ENCODE measurements at regions of chr6 and their contacts with region 1.

Region 1: DNA sequence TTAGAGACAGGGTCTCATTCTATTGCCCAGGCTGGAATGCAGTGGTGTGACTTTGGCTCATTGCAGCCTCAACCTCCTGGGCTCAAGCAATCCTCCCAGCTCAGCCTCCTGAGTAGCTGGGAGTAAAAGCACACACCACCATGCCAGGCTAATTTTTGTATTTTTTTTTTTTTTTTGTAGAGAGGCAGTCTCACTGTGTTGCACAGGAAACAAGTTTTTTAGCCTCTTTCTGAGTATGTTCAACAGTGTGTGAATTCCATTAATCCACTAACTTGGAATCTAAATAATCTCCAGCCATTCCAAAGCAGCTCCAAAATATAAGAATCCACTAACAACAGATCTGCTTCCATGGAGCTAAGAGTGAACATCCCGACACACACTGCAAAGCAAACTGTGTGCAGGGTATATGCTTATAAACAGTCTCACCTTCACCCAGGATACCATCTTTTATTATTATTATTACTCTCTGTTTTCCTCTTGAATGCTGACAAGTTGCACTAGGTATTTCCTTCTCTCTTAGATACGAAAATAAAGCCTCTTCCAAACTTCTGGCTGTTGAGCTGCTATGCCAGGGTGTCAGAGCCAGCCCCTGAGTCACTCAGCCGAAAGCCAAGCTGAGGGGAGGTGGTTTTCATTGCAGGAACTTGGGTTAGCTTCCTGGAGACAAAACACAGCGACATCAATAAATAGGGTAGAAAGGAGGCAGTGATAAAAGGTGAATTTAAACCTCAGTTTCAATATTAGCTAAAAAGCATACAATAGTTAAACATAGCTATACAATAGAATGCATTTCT is 264.9 kb downstream of the HIVEP2 start:
- DNase-seq: no peak
- H3K4me3 Mint-ChIP-seq: no peak overlapping the region
- H3K27ac Mint-ChIP-seq: no peak overlapping the region
- H3K4me1 Mint-ChIP-seq: no peaks in the 10 kb centered on the region
- H3K27me3 Mint-ChIP-seq: peaks cover 48% of the 10 kb centered on the region
- CTCF ChIP-seq: no peak

Region 2: DNA sequence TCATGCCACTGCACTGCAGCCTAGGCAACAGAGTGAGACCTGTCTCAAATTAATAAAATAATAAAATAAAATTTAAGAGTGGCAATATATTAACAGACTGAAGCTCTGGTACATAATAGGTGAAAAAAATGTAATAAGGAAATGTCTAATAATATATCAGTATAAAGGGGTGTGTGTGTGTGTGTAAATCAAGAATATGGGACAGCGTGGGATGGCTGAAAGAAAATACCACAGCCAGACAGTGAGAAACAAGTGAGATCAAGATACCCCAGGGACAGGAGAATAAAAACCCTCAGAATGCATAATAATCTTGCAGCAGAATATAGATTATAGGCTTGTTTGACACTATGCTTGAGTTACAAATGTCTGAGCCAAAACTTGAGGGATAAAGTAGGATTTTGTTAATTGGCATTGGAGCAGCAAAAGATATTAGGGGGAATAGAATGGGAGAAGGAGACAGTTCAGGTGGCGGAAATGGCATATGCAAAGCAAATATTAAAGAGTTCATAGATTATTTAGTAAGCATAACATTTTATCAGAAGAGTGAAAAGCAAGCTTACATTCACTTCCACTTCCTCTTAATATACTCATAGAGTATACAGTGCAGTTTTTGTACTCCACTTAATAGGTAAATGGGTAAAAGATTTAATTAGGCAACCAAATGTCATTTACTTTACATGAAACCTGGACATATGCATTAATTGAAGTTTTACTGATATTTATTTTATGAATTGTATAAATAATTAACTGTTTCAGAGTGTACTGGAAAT is 945.8 kb before region 1 on chr6:
- CTCF ChIA-PET with region 1: no interaction called
- intact Hi-C with region 1: no loop called
- DNase-seq: no peak
- H3K4me3 Mint-ChIP-seq: no peak overlapping the region
- H3K27ac Mint-ChIP-seq: no peak overlapping the region
- H3K4me1 Mint-ChIP-seq: no peaks in the 10 kb centered on the region
- H3K27me3 Mint-ChIP-seq: no peaks in the 10 kb centered on the region
- CTCF ChIP-seq: no peak

Region 3: GRCh38 chr6:142474531-142475289 is 205.4 kb before region 1 on chr6:
- CTCF ChIA-PET with region 1: no interaction called
- intact Hi-C with region 1: loop called (anchors 10 kb)
- DNase-seq: peak; percentile 62
- H3K4me3 Mint-ChIP-seq: no peak overlapping the region
- H3K27ac Mint-ChIP-seq: no peak overlapping the region
- H3K4me1 Mint-ChIP-seq: no peaks in the 10 kb centered on the region
- H3K27me3 Mint-ChIP-seq: peaks cover 7% of the 10 kb centered on the region
- CTCF ChIP-seq: peak; percentile 49

Measured in Calu3 (cell line).